K562 (cell line): ENCODE measurements at regions of chr5 and their contacts with region 1.

Region 1: DNA sequence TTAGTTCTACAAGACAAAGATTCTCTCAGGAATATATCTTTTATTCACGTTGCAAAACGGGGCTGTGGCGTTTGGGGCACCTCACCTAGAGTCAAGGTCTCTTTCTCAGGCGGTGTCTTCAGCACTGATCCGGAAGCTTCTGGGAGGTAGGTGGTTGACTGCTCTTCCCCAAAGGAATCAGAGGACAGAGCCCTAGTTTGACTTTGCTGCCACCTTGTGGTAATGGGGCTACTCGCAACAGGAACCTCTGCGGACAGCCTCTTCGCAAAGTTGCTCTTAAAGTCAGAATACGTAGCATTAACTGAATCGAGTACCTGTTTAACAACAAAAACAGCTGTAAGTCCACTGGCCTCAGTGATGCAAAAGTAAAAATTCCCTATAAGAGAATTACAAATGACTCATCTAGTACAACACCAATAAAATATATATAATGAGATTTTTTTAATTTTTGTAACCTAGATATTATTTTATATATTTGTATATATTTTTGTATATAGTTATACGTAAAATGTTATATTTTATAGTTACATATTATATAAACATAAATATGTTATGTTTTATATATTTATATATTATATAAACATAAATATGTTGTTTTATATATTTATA is 13.3 kb upstream of the GPX8 start:
- DNase-seq: peak; percentile 63 to 84 (median 68)
- ATAC-seq: peak; percentile 99
- H3K4me3 ChIP-seq: no peak overlapping the region
- H3K27ac ChIP-seq: no peak overlapping the region
- H3K4me1 ChIP-seq: no peaks in the 10 kb centered on the region
- H3K27me3 ChIP-seq: peaks cover 4 to 17% of the 10 kb centered on the region in 2 experiments; a peak in 3 of 5 replicates
- CTCF ChIP-seq: peak; percentile 86 to 91 (median 88)
- EP300 ChIP-seq: no peak
- POLR2A ChIP-seq: no peak
- RAD21 ChIP-seq: peak; percentile 80 to 88

Region 2: DNA sequence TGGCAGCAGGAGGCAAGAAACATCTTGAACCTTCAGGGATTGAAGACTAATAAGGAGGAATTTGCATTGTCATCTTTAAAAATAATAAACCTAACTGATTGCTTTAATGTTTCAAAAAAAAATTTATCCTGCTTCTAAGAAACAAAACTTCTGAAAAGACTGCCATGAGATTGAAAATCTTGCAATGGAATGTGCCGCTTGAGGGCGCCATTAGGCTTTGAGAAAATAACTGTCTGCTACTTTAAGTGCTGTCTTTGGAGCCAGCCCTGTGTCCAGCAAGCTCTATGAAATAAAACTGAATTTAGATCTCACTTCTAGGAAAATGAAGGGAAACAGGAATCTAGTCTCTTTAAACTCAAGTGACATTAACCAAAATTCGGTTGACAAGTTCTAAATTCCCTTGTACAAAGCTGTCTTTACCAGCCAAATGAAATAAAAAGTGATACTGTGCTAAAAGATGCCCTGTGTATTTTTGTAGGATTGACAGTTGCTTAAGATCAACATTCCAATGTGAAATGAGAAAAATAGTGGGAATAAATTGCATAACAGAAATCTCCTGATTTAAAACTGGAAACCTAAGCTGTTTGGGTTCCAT is 240.6 kb before region 1 on chr5:
- CTCF ChIA-PET with region 1: interaction called, 13 read pairs
- POLR2A ChIA-PET with region 1: no interaction called
- in situ Hi-C with region 1: loop called (anchors 10 kb)
- intact Hi-C with region 1: loop called (anchors 2 kb)
- DNase-seq: peak; percentile 37 to 61 (median 46)
- ATAC-seq: peak; percentile 69
- H3K4me3 ChIP-seq: no peak overlapping the region
- H3K27ac ChIP-seq: no peak overlapping the region
- H3K4me1 ChIP-seq: no peaks in the 10 kb centered on the region
- H3K27me3 ChIP-seq: peaks cover 0 to 7% of the 10 kb centered on the region in 2 experiments; a peak in 2 of 5 replicates
- CTCF ChIP-seq: peak; percentile 60 to 82 (median 68); a peak in 5 of 6 replicates
- EP300 ChIP-seq: no peak
- POLR2A ChIP-seq: no peak
- RAD21 ChIP-seq: peak; percentile 79 to 80

Region 3: GRCh38 chr5:54944364-54944763 is 202.3 kb before region 1 on chr5:
- CTCF ChIA-PET with region 1: interaction called, 7 read pairs
- POLR2A ChIA-PET with region 1: no interaction called
- in situ Hi-C with region 1: no loop called
- intact Hi-C with region 1: loop called (anchors 1 kb)
- DNase-seq: peak; percentile 17 to 29 (median 21)
- ATAC-seq: peak; percentile 49; the same call in 1 of the 3 replicates
- H3K4me3 ChIP-seq: no peak overlapping the region
- H3K27ac ChIP-seq: no peak overlapping the region
- H3K4me1 ChIP-seq: no peaks in the 10 kb centered on the region
- H3K27me3 ChIP-seq: no peaks in the 10 kb centered on the region
- CTCF ChIP-seq: peak; percentile 22 to 65 (median 58)
- EP300 ChIP-seq: no peak
- POLR2A ChIP-seq: no peak
- RAD21 ChIP-seq: peak; percentile 11 to 43; a peak in 2 of 4 replicates